CD8-positive, alpha-beta T cell (primary cell): ENCODE measurements at regions of chr2 and their contacts with region 1.

Region 1: GRCh38 chr2:148701877-148702276 is 57.3 kb downstream of the EPC2 start:
- DNase-seq: no peak
- ATAC-seq: no peak
- H3K4me3 ChIP-seq: no peak overlapping the region
- H3K4me3 Mint-ChIP-seq: no peak overlapping the region
- H3K27ac ChIP-seq: no peak overlapping the region
- H3K27ac Mint-ChIP-seq: no peak overlapping the region
- H3K4me1 ChIP-seq: no peaks in the 10 kb centered on the region
- H3K4me1 Mint-ChIP-seq: peaks cover 38% of the 10 kb centered on the region
- H3K27me3 ChIP-seq: no peaks in the 10 kb centered on the region
- H3K27me3 Mint-ChIP-seq: no peaks in the 10 kb centered on the region
- CTCF ChIP-seq: no peak

Region 2: DNA sequence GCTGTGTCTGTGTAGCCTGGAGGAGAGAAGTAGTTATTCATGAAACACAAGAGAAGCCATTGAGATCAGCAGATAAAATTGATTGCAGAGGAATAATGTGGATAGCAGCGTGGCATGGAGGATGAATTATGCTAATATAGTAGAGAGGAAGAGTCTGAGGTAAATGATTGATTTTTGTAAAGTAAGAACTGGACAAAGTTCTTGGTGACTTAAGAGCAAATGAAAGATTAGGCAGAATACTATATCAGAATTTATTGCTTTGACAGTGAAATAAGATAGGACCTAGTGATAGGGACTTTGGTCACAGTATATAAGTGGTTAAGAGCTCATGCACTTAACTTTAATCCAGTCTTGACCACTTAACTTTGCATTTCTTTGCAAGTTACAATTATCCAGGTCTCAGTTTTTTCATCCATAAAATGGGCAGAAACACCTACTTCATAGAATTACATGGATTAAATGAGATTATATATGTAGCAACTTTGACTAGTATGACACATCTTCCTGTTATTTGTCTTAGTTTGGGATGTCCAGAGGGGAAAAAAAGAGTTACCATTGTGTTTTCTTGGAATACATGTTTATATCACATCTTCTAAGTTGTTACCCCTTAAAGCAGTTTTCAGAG is 827.9 kb before region 1 on chr2:
- CTCF ChIA-PET with region 1: no interaction called
- POLR2A ChIA-PET with region 1: no interaction called
- intact Hi-C with region 1: no loop called
- DNase-seq: no peak
- ATAC-seq: no peak
- H3K4me3 ChIP-seq: no peak overlapping the region
- H3K4me3 Mint-ChIP-seq: no peak overlapping the region
- H3K27ac ChIP-seq: no peak overlapping the region
- H3K27ac Mint-ChIP-seq: no peak overlapping the region
- H3K4me1 ChIP-seq: no peaks in the 10 kb centered on the region
- H3K4me1 Mint-ChIP-seq: no peaks in the 10 kb centered on the region
- H3K27me3 ChIP-seq: no peaks in the 10 kb centered on the region
- H3K27me3 Mint-ChIP-seq: no peaks in the 10 kb centered on the region
- CTCF ChIP-seq: no peak

Region 3: GRCh38 chr2:148540022-148540421 is 161.9 kb before region 1 on chr2:
- CTCF ChIA-PET with region 1: no interaction called
- POLR2A ChIA-PET with region 1: no interaction called
- intact Hi-C with region 1: no loop called
- DNase-seq: peak in 1 of 9 experiments; percentile 40
- ATAC-seq: peak; percentile 71
- H3K4me3 ChIP-seq: peak overlapping the region in 1 of 2 experiments; percentile 3
- H3K4me3 Mint-ChIP-seq: peak overlapping the region; percentile 55
- H3K27ac ChIP-seq: no peak overlapping the region
- H3K27ac Mint-ChIP-seq: peak overlapping the region; percentile 79
- H3K4me1 ChIP-seq: peaks cover 32% of the 10 kb centered on the region
- H3K4me1 Mint-ChIP-seq: peaks cover 42% of the 10 kb centered on the region
- H3K27me3 ChIP-seq: no peaks in the 10 kb centered on the region
- H3K27me3 Mint-ChIP-seq: no peaks in the 10 kb centered on the region
- CTCF ChIP-seq: no peak

Region 4: DNA sequence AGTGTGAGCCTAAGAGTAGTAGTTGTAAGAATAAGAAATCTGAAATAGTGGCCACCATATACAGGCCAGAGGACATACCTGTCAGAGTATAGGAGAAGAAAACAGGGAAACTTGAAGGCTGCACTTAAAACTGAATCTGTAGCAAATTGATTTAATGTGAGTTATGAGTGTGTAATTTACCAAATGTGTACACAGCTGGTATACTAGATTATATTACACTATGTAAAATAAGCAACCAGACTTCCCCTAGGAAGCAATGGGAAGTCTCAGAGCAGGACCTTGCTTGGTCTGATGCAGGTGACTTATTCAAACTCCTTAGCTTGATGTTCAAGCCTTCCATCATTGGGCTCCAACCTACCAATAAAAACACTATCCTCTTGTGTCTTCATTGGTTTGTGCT is 74.7 kb before region 1 on chr2:
- CTCF ChIA-PET with region 1: no interaction called
- POLR2A ChIA-PET with region 1: no interaction called
- intact Hi-C with region 1: no loop called
- DNase-seq: no peak
- ATAC-seq: no peak
- H3K4me3 ChIP-seq: no peak overlapping the region
- H3K4me3 Mint-ChIP-seq: no peak overlapping the region
- H3K27ac ChIP-seq: no peak overlapping the region
- H3K27ac Mint-ChIP-seq: no peak overlapping the region
- H3K4me1 ChIP-seq: no peaks in the 10 kb centered on the region
- H3K4me1 Mint-ChIP-seq: peaks cover 4% of the 10 kb centered on the region
- H3K27me3 ChIP-seq: no peaks in the 10 kb centered on the region
- H3K27me3 Mint-ChIP-seq: no peaks in the 10 kb centered on the region
- CTCF ChIP-seq: no peak

Region 5: DNA sequence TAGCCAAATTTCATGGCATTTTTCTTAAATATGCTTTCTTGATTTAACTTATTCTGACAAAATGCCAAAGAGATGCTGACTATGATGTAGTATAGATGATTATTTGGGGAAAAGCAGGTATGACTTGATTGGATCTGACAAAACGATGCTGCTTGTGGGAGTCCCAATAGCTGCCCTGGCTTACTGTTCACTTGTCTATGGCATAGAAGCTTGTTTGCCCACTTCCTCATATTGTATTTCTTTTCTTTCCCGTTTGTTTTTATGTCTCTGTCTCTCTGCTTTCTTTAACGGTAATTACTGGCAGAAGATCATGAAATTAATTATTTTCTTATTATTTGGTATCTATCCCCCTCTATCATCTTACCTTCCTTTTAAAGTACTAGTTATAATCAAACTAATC is 14.3 kb before region 1 on chr2:
- CTCF ChIA-PET with region 1: interaction called, 4 read pairs
- POLR2A ChIA-PET with region 1: interaction called, 3 read pairs
- intact Hi-C with region 1: loop called in 1 of 2 experiments (anchors 2 kb)
- DNase-seq: no peak
- ATAC-seq: no peak
- H3K4me3 ChIP-seq: no peak overlapping the region
- H3K4me3 Mint-ChIP-seq: no peak overlapping the region
- H3K27ac ChIP-seq: no peak overlapping the region
- H3K27ac Mint-ChIP-seq: no peak overlapping the region
- H3K4me1 ChIP-seq: peaks cover 14% of the 10 kb centered on the region
- H3K4me1 Mint-ChIP-seq: peaks cover 71% of the 10 kb centered on the region
- H3K27me3 ChIP-seq: no peaks in the 10 kb centered on the region
- H3K27me3 Mint-ChIP-seq: no peaks in the 10 kb centered on the region
- CTCF ChIP-seq: no peak

Region 6: DNA sequence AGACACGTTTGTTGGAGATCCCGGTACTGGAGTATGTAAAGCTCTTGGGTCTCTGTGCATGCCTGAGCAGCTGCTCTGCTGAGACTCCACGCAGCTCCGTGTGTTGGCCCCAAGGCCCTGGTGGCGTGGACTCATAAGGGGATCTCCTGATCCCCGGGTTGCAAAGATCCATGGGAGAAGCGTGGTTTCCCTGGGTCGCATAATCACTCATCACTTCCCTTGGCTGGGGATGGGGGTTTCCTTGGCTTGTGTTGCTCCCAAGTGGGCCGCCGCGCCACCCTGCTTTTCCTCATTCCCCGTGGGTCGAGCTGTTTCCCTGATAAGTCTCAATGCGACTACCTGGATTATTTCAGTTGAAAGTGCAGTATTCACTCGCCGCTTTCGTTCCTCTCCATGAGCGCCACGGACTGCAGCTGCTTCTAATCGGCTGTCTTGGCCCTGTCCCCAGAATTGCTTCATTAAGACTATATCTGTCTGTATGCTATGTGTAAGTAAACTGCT is 18.7 kb after region 1 on chr2:
- CTCF ChIA-PET with region 1: no interaction called
- POLR2A ChIA-PET with region 1: no interaction called
- intact Hi-C with region 1: no loop called
- DNase-seq: peak in 1 of 9 experiments; percentile 17
- ATAC-seq: no peak
- H3K4me3 ChIP-seq: no peak overlapping the region
- H3K4me3 Mint-ChIP-seq: peak overlapping the region; percentile 4
- H3K27ac ChIP-seq: no peak overlapping the region
- H3K27ac Mint-ChIP-seq: peak overlapping the region; percentile 37
- H3K4me1 ChIP-seq: peaks cover 39% of the 10 kb centered on the region
- H3K4me1 Mint-ChIP-seq: peaks cover 92% of the 10 kb centered on the region
- H3K27me3 ChIP-seq: no peaks in the 10 kb centered on the region
- H3K27me3 Mint-ChIP-seq: no peaks in the 10 kb centered on the region
- CTCF ChIP-seq: no peak